H1 (cell line): ENCODE measurements at regions of chr17 and their contacts with region 1.

Region 1: DNA sequence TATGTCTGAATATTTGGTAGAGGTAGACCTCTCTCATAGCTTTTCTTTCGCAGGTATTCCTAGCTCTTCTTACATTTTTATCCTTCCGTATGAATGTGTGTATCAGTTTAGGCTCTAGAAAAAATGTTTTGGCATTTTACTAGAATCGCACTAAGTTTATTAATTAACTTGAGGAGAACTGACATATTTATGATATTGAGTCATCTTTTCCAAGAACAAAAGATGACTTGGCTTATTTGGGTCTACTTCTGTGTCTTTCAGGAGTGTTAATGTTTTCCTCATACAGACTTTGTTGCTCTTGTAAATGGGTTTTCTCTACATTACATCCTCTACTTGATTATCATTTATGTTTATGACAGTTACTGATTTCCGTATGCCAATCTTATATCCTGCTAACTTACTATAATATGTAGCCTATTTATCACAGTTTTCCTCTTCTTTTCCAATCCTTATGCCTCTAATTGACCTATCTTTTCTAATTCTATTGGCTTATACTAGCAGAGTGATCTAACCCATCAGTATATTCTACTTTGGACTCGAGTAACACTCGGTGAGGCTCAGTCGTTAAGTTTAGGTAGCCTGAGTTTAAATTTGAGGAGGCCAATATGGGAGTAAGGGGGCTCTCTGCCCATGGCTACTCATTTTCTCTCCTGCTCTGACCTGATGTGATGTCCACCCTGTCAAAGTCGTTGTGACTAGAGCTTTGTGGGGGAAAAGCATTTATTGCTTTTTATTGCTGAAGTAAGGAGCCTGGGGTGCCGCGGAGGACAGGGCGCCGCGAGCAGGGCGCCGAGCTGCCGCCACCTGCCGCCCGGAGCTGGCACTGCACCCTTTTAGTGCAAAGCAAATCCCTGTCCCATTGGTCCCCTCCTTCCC is 20.0 kb downstream of the ST6GALNAC1 start:
- DNase-seq: peak in 1 of 2 experiments; percentile 93
- H3K4me3 ChIP-seq: no peak overlapping the region
- H3K27ac ChIP-seq: no peak overlapping the region
- H3K4me1 ChIP-seq: no peaks in the 10 kb centered on the region
- H3K27me3 ChIP-seq: no peaks in the 10 kb centered on the region; a peak in 2 of 7 replicates
- CTCF ChIP-seq: peak; percentile 81 to 94 (median 85)
- EP300 ChIP-seq: no peak
- POLR2A ChIP-seq: no peak
- RAD21 ChIP-seq: peak; percentile 83 to 85

Region 2: GRCh38 chr17:76523084-76524037 is 100.1 kb before region 1 on chr17:
- CTCF ChIA-PET with region 1: interaction called, 34 read pairs
- POLR2A ChIA-PET with region 1: no interaction called
- DNase-seq: peak; percentile 49 to 96
- H3K4me3 ChIP-seq: no peak overlapping the region
- H3K27ac ChIP-seq: no peak overlapping the region
- H3K4me1 ChIP-seq: peaks cover 0 to 19% (median 10%) of the 10 kb centered on the region in 4 experiments; a peak in 6 of 7 replicates
- H3K27me3 ChIP-seq: peaks cover 0 to 5% (median 0%) of the 10 kb centered on the region in 4 experiments; a peak in 3 of 7 replicates
- CTCF ChIP-seq: peak; percentile 97 to 99 (median 99)
- EP300 ChIP-seq: peak in 1 of 2 experiments; percentile 43; a peak in 1 of 3 replicates
- POLR2A ChIP-seq: no peak
- RAD21 ChIP-seq: peak; percentile 91 to 92

Region 3: DNA sequence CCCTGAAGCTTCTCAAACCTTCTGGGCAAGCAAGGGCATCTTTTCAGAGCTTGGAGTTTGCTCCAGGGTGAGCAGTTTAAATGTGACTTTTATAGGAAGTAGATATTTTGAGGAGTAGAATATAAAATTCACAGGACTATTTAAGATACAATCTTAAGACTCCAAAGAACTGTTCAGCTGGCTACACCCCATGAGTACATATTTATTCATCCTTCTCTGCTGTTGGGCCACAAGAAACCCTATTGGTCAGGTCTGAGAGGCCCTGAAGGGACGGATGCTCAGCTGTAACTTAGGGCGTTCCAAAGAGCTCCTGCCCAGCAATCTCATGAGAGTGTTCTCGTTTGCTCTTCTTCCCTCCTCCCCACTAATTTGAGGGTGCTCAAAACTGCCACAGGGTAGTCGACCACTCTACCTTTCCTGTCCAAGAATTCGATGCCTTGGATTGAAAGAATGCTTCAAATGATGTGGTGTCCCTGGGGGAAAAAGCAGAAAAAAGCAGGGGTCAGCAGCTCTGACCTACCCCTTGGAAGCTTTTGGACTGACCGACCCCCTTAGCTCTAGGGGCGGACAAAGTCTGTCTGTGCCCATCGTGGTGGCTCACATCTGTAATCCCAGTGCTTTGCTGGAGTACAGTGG is 45.0 kb before region 1 on chr17:
- CTCF ChIA-PET with region 1: interaction called, 12 read pairs
- POLR2A ChIA-PET with region 1: no interaction called
- DNase-seq: no peak
- H3K4me3 ChIP-seq: no peak overlapping the region
- H3K27ac ChIP-seq: no peak overlapping the region
- H3K4me1 ChIP-seq: peaks cover 0 to 9% (median 4%) of the 10 kb centered on the region in 4 experiments; a peak in 5 of 7 replicates
- H3K27me3 ChIP-seq: peaks cover 0 to 31% (median 25%) of the 10 kb centered on the region in 4 experiments; a peak in 6 of 7 replicates
- CTCF ChIP-seq: no peak
- EP300 ChIP-seq: no peak
- POLR2A ChIP-seq: no peak
- RAD21 ChIP-seq: no peak

Region 4: GRCh38 chr17:76597728-76598474 is 25.6 kb before region 1 on chr17:
- CTCF ChIA-PET with region 1: interaction called, 35 read pairs
- POLR2A ChIA-PET with region 1: interaction called, 3 read pairs
- DNase-seq: no peak
- H3K4me3 ChIP-seq: no peak overlapping the region
- H3K27ac ChIP-seq: no peak overlapping the region
- H3K4me1 ChIP-seq: peaks cover 0 to 7% (median 3%) of the 10 kb centered on the region in 4 experiments; a peak in 3 of 7 replicates
- H3K27me3 ChIP-seq: no peaks in the 10 kb centered on the region; a peak in 2 of 7 replicates
- CTCF ChIP-seq: no peak
- EP300 ChIP-seq: no peak
- POLR2A ChIP-seq: no peak
- RAD21 ChIP-seq: no peak

Region 5: DNA sequence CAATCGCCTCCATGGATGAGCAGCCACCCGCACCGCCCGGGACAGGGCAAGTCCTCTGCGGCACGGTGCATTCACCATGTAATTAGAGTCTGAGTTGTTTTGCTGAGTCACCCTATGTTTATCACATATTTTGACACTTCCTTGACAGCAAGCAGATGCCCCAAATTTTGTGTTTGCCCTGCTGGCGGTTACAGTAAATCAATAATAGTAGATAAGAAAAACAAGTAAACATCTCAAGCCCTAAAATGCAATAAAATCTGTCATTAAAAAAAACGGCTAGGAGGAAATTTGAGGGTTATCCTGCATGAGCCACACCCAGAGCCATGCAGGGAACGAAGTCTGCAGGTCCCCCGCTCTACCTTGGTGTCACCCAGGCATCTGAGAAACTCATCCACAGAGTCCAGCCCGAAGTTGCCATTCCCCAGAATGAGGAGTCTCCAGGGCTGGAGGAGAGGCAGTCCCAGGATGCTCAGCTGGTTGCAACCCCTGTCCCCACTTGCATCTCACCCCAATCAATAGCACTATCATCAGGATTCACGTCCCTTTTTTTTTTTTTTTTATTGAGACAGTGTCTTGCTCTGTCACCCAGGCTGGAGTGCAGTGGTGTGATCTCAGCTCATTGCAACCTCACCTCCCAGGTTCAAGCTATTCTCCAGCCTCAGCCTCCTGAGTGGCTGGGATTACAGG is 36.6 kb after region 1 on chr17:
- CTCF ChIA-PET with region 1: interaction called, 10 read pairs
- POLR2A ChIA-PET with region 1: no interaction called
- DNase-seq: no peak
- H3K4me3 ChIP-seq: no peak overlapping the region
- H3K27ac ChIP-seq: no peak overlapping the region
- H3K4me1 ChIP-seq: no peaks in the 10 kb centered on the region
- H3K27me3 ChIP-seq: no peaks in the 10 kb centered on the region
- CTCF ChIP-seq: no peak
- EP300 ChIP-seq: no peak
- POLR2A ChIP-seq: no peak
- RAD21 ChIP-seq: no peak

Region 6: DNA sequence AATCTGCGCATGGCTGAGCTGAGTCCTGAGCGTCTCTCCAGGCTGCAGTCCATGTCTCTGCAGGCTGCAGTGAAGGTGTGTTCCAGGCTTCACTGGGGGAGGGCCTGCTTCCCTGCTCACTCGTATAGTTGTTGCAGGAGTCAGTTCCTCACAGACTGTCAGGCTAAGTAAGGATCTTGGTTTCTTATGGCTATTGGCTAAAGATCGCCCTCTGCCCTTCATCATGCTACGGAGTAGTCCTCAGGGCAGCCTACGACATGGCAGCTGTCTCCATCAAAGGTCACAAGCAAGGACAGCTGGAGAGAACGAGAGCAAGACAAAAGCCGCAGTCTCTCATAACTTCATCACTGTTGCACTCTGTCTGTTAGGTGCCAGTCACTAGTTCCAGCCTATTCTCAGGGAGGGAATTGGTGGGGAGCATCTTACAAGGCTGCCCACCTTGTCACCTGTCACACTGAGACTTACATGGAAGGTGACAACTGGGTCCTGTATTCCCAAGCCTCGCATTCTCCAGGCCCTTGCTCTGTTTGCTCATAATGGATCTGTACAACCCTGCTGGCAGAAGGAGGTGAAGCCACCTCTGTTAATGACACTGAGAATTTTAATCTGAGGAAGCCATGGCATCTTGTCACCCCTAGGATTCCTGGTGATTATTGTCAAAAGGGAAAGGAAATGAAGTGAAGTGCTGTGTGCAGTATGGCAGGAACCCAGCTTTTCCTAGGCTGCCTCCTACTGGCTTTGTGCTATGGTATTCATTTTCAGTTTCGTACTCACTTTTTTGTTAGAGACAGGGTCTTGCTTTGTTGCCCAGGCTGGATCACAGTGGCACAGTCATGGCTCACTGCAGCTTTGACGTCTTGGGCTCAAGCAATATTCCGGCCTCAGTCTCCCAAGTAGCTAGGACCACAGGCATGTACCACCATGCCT is 157.8 kb after region 1 on chr17:
- CTCF ChIA-PET with region 1: no interaction called
- POLR2A ChIA-PET with region 1: no interaction called
- DNase-seq: no peak
- H3K4me3 ChIP-seq: no peak overlapping the region
- H3K27ac ChIP-seq: no peak overlapping the region
- H3K4me1 ChIP-seq: no peaks in the 10 kb centered on the region
- H3K27me3 ChIP-seq: no peaks in the 10 kb centered on the region
- CTCF ChIP-seq: peak in 1 of 3 experiments; percentile 12; a peak in 1 of 4 replicates
- EP300 ChIP-seq: no peak
- POLR2A ChIP-seq: no peak
- RAD21 ChIP-seq: peak in 1 of 2 experiments; percentile 18; a peak in 1 of 4 replicates